Heart right ventricle (tissue), 16 donors: ENCODE measurements at regions of chr19 and their contacts with region 1.

Region 1: GRCh38 chr19:13033819-13034611 is 38.7 kb downstream of the NFIX start:
- DNase-seq: peak; percentile 85
- ATAC-seq: peak; percentile 50 to 73 (median 58)
- H3K4me3 ChIP-seq: no peak overlapping the region
- H3K27ac ChIP-seq: peak overlapping the region in 9 of 10 donors; percentile 24 to 96 (median 79)
- H3K4me1 ChIP-seq: peaks cover 56 to 100% (median 92%) of the 10 kb centered on the region in 9 donors
- H3K27me3 ChIP-seq: no peaks in the 10 kb centered on the region
- CTCF ChIP-seq: peak; percentile 58 to 86 (median 82)

Region 2: DNA sequence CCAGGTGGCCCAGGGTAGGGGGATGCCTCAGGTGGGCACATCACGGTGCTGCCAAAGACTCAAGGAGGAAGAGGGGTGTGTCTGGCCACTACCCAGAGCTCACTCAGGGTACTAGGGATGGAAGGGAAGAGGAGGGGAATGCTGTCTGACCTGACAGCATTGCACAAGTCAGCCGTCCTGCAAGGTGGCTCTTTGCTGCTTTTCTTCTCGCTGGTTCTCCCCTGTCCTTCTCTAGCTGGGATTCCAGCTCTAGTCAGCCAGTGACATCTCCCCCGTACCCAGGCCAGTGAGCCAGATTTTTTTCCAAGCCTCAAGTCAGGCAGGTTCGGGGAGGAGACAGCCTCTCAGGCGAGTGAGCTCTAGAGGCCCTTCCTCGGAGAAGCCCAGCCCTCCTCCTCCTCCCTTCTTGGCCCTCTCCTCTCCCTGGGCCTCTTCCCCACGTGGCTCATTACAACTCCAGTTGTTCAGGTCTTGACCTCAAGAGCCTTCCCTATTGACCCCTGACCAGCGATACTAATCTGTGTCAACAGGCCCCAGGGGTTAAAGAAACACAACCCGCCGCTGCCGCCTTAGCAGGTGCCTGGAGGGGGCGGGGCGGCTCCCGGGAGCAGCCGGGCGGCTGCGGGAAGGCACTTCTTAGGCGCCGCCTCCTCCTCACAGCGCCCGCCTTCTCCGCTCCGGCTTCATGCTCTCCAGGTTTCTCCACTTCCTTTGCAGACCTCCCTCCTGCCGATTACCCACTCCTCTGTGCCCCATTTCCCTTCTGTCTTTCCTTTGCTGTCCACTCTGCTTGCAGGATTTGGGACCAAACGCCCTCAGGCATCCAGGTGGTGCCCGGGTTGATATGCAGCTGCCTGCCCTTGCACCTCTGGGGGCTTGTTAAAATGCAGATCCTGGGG is 17.5 kb after region 1 on chr19:
- intact Hi-C with region 1: loop called in 1 of 10 experiments (anchors 2 kb)
- DNase-seq: peak in 1 of 2 donors; percentile 67
- ATAC-seq: peak in 4 of 8 donors; percentile 8 to 28 (median 16)
- H3K4me3 ChIP-seq: peak overlapping the region in 5 of 10 donors; percentile 8 to 24 (median 15)
- H3K27ac ChIP-seq: peak overlapping the region in 8 of 10 donors; percentile 80 to 99 (median 98)
- H3K4me1 ChIP-seq: peaks cover 60 to 92% (median 87%) of the 10 kb centered on the region in 9 donors
- H3K27me3 ChIP-seq: peaks cover 0 to 6% (median 0%) of the 10 kb centered on the region in 7 donors
- CTCF ChIP-seq: peak in 1 of 9 donors; percentile 20

Region 3: DNA sequence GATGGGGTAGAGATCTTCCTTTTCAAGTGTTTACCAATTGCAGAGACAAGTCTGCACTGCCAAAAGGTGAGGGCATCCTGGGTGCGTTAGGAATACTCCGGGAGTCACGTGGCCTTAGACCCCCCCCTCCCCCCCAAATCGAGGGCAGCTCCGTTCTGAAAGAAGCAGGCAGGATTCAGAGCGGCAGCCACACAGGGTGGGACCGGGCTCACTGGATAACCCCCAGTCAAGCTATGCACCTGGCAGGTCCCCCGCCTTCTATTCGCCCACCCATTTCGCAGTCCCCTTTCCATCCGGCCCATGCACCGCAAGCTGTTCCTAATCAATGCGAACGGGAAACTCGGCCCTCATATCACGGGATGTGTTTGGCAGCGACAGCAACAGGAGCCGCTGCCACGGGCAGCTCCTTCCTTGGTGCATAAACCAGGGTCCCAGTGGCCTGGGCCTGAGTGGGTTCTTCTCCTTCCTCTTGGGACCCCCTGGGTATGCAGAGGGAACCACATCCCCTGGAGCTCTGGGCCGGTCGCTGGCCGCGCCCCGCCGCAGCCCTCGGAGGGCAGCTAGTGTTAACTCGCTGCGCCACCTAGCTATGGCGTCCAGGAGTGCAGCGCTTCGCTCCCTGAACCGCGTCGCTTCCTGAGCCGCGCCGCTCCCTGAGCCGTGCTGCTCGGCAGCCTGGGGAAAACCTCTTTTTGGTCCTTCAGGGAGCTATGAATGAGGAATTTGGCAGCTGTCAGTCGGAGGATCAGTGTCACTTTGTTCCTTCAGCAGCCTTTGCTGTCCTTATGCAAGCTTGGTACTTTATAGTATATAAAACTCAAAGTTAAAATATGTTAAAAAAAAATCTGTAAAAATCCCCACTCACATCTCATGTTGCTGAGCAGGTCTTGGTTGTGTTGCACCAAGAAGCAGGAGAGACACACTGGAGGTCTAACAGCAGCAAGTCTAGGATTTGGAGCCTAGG is 27.2 kb after region 1 on chr19:
- intact Hi-C with region 1: loop called in 2 of 10 experiments (anchors 2 to 5 kb)
- DNase-seq: peak; percentile 89 to 91
- ATAC-seq: peak; percentile 70 to 87 (median 78)
- H3K4me3 ChIP-seq: peak overlapping the region in 9 of 10 donors; percentile 33 to 56 (median 49)
- H3K27ac ChIP-seq: peak overlapping the region; percentile 67 to 99 (median 96)
- H3K4me1 ChIP-seq: peaks cover 75 to 100% (median 100%) of the 10 kb centered on the region in 9 donors
- H3K27me3 ChIP-seq: no peaks in the 10 kb centered on the region
- CTCF ChIP-seq: peak; percentile 95 to 99 (median 98)